ENCODE measurements at regions of chr10 and their contacts with region 1.

Region 1: GRCh38 chr10:95363303-95363912 is 72.6 kb upstream of the PDLIM1 start:
- DNase-seq: peak; percentile 68
- H3K4me3 Mint-ChIP-seq: no peak overlapping the region
- H3K27ac Mint-ChIP-seq: no peak overlapping the region
- H3K4me1 Mint-ChIP-seq: no peaks in the 10 kb centered on the region
- H3K27me3 Mint-ChIP-seq: peaks cover 20% of the 10 kb centered on the region

Region 2: GRCh38 chr10:95133016-95133752 is 230.2 kb before region 1 on chr10:
- CTCF ChIA-PET with region 1: interaction called, 21 read pairs
- DNase-seq: peak; percentile 86
- H3K4me3 Mint-ChIP-seq: no peak overlapping the region
- H3K27ac Mint-ChIP-seq: no peak overlapping the region
- H3K4me1 Mint-ChIP-seq: no peaks in the 10 kb centered on the region
- H3K27me3 Mint-ChIP-seq: no peaks in the 10 kb centered on the region

Region 3: GRCh38 chr10:95183271-95184230 is 179.9 kb before region 1 on chr10:
- CTCF ChIA-PET with region 1: interaction called, 10 read pairs
- DNase-seq: peak; percentile 79
- H3K4me3 Mint-ChIP-seq: peak overlapping the region; percentile 62
- H3K27ac Mint-ChIP-seq: peak overlapping the region; percentile 20
- H3K4me1 Mint-ChIP-seq: peaks cover 7% of the 10 kb centered on the region
- H3K27me3 Mint-ChIP-seq: peaks cover 35% of the 10 kb centered on the region

Measured in activated naive CD4-positive, alpha-beta T cell treated with anti-CD3 and anti-CD28 coated beads, Interleukin-2, amount 10 ng/mL, durations not matched to agents 7 days and 5 days (primary cell).